ENCODE measurements at regions of chrX and their contacts with region 1.

Region 1: DNA sequence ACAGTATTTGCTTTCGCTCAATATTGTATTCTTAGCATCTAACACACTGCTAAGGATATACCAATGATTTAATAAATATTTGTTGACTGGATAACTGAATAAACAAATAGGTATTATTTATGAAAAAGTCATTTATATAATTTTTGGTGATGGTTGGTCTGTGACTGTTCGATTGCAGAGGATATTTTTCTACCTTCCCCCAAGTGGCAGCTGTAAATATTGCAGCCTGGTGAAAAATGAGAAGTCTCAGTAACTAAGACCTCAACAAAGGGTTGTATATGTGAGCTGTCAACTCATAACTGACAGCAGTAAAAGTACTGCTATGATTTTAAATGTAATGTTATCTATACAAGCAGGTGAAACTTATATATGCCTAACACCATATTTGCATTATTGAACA is 36.0 kb downstream of the HTR2C start:
- DNase-seq: no peak
- H3K4me3 ChIP-seq: no peak overlapping the region
- H3K27ac ChIP-seq: no peak overlapping the region
- H3K4me1 ChIP-seq: no peaks in the 10 kb centered on the region
- H3K27me3 ChIP-seq: no peaks in the 10 kb centered on the region
- CTCF ChIP-seq: no peak
- EP300 ChIP-seq: no peak
- POLR2A ChIP-seq: no peak

Region 2: DNA sequence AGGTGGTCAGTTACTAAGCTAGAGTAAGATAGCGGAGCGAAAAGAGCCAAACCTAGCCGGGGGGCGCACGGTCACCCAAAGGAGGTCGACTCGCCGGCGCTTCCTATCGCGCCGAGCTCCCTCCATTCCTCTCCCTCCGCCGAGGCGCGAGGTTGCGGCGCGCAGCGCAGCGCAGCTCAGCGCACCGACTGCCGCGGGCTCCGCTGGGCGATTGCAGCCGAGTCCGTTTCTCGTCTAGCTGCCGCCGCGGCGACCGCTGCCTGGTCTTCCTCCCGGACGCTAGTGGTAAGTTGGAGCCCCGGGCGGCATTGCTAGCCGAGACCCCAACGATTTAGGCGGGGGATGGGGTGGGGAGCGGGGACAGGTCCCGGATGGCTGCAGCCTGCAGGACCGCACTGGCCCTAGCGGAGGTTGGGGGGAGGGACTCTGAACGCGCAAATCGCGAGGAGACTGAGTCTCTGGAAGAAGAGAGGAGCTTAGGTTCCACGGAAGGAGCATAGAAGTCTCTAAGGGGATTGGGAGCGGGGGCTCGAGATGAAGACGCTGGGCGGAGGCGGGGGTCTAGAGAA is 35.4 kb before region 1 on chrX:
- intact Hi-C with region 1: loop called in 1 of 4 experiments (anchors 2 kb)
- DNase-seq: no peak
- H3K4me3 ChIP-seq: no peak overlapping the region
- H3K27ac ChIP-seq: no peak overlapping the region
- H3K4me1 ChIP-seq: no peaks in the 10 kb centered on the region
- H3K27me3 ChIP-seq: no peaks in the 10 kb centered on the region
- CTCF ChIP-seq: no peak
- EP300 ChIP-seq: no peak
- POLR2A ChIP-seq: no peak

Region 3: GRCh38 chrX:114787061-114787460 is 167.2 kb after region 1 on chrX:
- intact Hi-C with region 1: no loop called
- DNase-seq: no peak
- H3K4me3 ChIP-seq: no peak overlapping the region
- H3K27ac ChIP-seq: no peak overlapping the region
- H3K4me1 ChIP-seq: no peaks in the 10 kb centered on the region
- H3K27me3 ChIP-seq: peaks cover 3% of the 10 kb centered on the region
- CTCF ChIP-seq: no peak
- EP300 ChIP-seq: no peak
- POLR2A ChIP-seq: no peak

Measured in ovary (tissue), 10 donors.